ENCODE measurements at regions of chr12 and their contacts with region 1.

Region 1: GRCh38 chr12:26701604-26702215 is 131.3 kb downstream of the ITPR2 start:
- DNase-seq: no peak
- ATAC-seq: no peak
- H3K4me3 Mint-ChIP-seq: no peak overlapping the region
- H3K27ac Mint-ChIP-seq: no peak overlapping the region
- H3K4me1 Mint-ChIP-seq: no peaks in the 10 kb centered on the region
- H3K27me3 Mint-ChIP-seq: no peaks in the 10 kb centered on the region

Region 2: DNA sequence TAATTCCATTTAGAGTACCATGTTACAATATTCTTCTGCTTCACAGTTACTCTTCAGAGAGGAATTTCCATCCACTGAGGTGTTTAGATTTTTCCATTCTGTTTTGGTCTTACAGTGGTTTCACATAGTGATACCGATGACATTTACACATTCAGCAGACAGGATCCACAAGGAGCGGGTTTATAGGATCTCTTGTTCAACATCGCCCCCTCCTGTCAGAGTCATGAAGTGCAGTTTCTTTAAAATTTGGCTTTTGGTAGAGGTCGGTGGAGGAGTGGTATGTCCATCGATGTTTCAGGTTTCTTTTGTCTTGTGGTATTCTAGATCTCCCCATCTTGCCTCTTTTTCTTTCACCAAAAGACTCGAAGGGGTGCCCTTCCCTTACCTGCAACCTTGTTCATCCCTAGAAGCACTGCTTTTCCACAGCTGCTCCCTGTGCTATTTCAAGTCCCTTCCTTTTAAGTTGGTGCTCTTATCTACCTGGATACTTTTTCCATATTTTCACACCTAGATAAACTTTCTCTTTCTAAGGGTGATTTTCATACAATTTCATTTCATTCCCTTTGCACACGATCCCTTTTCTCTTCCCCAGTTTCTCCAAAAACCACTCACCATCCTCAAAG is 50.0 kb before region 1 on chr12:
- CTCF ChIA-PET with region 1: no interaction called
- POLR2A ChIA-PET with region 1: no interaction called
- DNase-seq: peak; percentile 66
- ATAC-seq: no peak
- H3K4me3 Mint-ChIP-seq: no peak overlapping the region
- H3K27ac Mint-ChIP-seq: no peak overlapping the region
- H3K4me1 Mint-ChIP-seq: no peaks in the 10 kb centered on the region
- H3K27me3 Mint-ChIP-seq: no peaks in the 10 kb centered on the region

Region 3: GRCh38 chr12:26691234-26691970 is 10.3 kb before region 1 on chr12:
- CTCF ChIA-PET with region 1: interaction called, 10 read pairs
- POLR2A ChIA-PET with region 1: no interaction called
- DNase-seq: no peak
- ATAC-seq: no peak
- H3K4me3 Mint-ChIP-seq: no peak overlapping the region
- H3K27ac Mint-ChIP-seq: no peak overlapping the region
- H3K4me1 Mint-ChIP-seq: no peaks in the 10 kb centered on the region
- H3K27me3 Mint-ChIP-seq: no peaks in the 10 kb centered on the region